ENCODE measurements at regions of chr13 and their contacts with region 1.

Region 1: DNA sequence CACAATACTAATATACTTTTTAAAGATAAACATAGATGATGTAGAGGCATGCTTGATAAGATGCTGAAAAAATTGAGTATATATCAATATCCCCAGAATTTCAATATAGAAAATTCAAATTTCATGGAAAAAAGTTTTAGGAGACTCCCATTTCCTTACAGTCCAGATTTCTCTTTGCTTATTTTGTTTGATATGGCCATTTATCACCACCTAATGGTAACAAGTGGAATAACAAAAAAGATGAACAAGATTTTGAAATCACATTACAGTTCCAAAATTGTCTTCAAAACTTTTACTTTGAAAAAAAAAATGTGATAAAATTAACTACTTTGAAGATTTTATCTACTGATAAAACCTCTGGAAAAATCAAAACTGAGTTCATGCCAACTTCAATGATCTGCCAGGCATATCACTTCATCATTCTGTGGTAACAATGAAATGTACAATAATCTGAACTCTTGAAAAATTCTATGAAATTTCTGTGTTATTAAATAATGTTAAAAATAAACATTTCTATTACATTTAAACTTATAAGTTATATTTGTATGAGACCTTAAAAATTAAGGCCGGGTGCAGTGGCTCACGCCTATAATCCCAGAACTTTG is 17.5 kb downstream of the MIPEP start:
- DNase-seq: peak in 2 of 5 donors; percentile 63 to 88
- H3K4me3 ChIP-seq: no peak overlapping the region
- H3K27ac ChIP-seq: no peak overlapping the region
- H3K4me1 ChIP-seq: no peaks in the 10 kb centered on the region
- H3K27me3 ChIP-seq: no peaks in the 10 kb centered on the region
- CTCF ChIP-seq: peak; percentile 58

Region 2: DNA sequence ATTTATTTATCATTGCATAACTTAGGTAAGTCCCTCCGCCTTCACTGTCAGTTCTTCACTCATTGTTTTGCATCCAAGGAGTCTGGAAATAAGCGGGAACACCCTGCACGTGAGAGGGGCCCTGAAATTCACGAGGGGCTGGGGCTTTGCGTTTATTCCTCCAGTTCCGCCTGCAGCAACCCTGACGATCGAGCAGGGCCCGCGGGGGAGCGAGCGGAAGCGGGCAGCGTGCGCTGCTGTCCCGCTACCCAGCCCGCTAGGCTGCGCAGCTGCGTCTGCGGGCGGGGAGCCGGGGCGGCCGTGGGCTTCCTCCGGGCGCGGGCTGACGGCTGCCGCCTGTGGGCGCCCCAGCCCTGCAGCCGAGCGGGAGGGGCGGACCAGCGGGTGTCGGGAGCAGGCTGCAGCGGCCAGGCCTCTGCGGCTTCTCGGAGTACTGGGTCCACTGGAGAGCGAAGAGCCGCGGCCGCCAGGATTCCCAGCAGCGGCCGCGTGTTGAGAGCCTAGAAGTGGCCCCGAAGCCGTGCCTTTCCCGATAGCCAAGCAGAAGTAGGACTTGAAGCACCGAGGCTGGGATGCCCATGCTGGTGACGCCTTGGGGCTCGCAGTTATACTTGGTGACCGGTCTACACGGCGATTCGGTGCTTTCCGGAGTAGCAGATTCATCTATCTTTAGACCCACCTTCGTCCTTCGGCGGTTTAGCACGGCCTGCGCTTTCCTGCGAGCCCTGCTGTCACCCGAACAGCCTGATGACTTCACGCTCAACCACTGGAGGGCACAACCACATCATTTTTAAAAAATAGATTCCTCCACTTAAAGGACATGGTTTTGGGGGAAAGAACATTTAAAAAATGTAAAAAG is 405.3 kb before region 1 on chr13:
- intact Hi-C with region 1: loop called (anchors 10 kb)
- DNase-seq: peak; percentile 86 to 93 (median 86)
- H3K4me3 ChIP-seq: peak overlapping the region; percentile 66 to 77 (median 74)
- H3K27ac ChIP-seq: no peak overlapping the region
- H3K4me1 ChIP-seq: peaks cover 0 to 3% (median 0%) of the 10 kb centered on the region in 3 donors
- H3K27me3 ChIP-seq: no peaks in the 10 kb centered on the region
- CTCF ChIP-seq: peak; percentile 80

Region 3: GRCh38 chr13:23766283-23766682 is 105.4 kb before region 1 on chr13:
- intact Hi-C with region 1: no loop called
- DNase-seq: no peak
- H3K4me3 ChIP-seq: no peak overlapping the region
- H3K27ac ChIP-seq: no peak overlapping the region
- H3K4me1 ChIP-seq: no peaks in the 10 kb centered on the region
- H3K27me3 ChIP-seq: no peaks in the 10 kb centered on the region
- CTCF ChIP-seq: no peak

Measured in kidney (tissue), 22 donors.